Caco-2 (cell line): ENCODE measurements at regions of chr1 and their contacts with region 1.

Region 1: DNA sequence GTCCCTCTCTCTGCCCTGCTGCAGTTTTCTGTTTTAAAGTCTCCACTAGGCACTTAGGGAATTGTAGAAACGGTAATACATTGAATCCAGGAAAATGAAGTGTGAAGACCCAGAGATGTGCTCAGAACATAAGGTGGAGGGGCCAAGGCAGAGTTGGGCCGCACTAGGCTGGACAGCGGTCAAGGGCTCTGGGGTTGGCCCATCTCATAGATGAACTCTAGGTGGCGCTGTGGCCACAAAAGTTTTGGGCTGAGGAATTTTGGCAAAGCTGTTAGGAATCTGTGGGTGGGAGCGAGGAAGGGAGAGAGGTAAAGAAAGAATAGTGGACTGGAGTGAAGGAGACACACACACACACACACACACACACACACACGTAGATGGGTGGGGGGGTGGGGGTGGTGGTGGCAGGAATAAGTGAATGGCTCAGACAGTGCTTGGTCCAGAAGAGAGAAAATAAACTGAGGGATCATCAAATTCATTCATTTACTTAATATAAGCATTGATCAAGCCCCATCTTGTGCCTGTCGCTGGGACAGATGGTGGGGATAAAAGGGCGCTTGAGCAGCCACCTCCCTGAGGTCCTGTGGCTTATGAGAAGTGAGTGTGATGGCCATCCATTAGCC is 258.5 kb downstream of the TRABD2B start:
- DNase-seq: peak; percentile 46 to 69
- H3K4me3 ChIP-seq: no peak overlapping the region
- H3K4me3 Mint-ChIP-seq: no peak overlapping the region
- H3K27ac Mint-ChIP-seq: no peak overlapping the region
- H3K4me1 ChIP-seq: no peaks in the 10 kb centered on the region
- H3K4me1 Mint-ChIP-seq: no peaks in the 10 kb centered on the region
- H3K27me3 ChIP-seq: no peaks in the 10 kb centered on the region
- H3K27me3 Mint-ChIP-seq: no peaks in the 10 kb centered on the region
- CTCF ChIP-seq: peak; percentile 65 to 82

Region 2: GRCh38 chr1:47755101-47755990 is 16.7 kb after region 1 on chr1:
- CTCF ChIA-PET with region 1: interaction called, 5 read pairs
- POLR2A ChIA-PET with region 1: no interaction called
- intact Hi-C with region 1: loop called (anchors 1 kb)
- DNase-seq: peak; percentile 53 to 71
- H3K4me3 ChIP-seq: no peak overlapping the region
- H3K4me3 Mint-ChIP-seq: no peak overlapping the region
- H3K27ac Mint-ChIP-seq: no peak overlapping the region
- H3K4me1 ChIP-seq: no peaks in the 10 kb centered on the region
- H3K4me1 Mint-ChIP-seq: peaks cover 7% of the 10 kb centered on the region
- H3K27me3 ChIP-seq: no peaks in the 10 kb centered on the region
- H3K27me3 Mint-ChIP-seq: no peaks in the 10 kb centered on the region
- CTCF ChIP-seq: peak; percentile 59 to 63

Region 3: GRCh38 chr1:47782124-47782789 is 43.6 kb after region 1 on chr1:
- CTCF ChIA-PET with region 1: no interaction called
- POLR2A ChIA-PET with region 1: no interaction called
- intact Hi-C with region 1: no loop called
- DNase-seq: no peak
- H3K4me3 ChIP-seq: no peak overlapping the region
- H3K4me3 Mint-ChIP-seq: no peak overlapping the region
- H3K27ac Mint-ChIP-seq: no peak overlapping the region
- H3K4me1 ChIP-seq: no peaks in the 10 kb centered on the region
- H3K4me1 Mint-ChIP-seq: peaks cover 7% of the 10 kb centered on the region
- H3K27me3 ChIP-seq: no peaks in the 10 kb centered on the region
- H3K27me3 Mint-ChIP-seq: peaks cover 4% of the 10 kb centered on the region
- CTCF ChIP-seq: no peak

Region 4: DNA sequence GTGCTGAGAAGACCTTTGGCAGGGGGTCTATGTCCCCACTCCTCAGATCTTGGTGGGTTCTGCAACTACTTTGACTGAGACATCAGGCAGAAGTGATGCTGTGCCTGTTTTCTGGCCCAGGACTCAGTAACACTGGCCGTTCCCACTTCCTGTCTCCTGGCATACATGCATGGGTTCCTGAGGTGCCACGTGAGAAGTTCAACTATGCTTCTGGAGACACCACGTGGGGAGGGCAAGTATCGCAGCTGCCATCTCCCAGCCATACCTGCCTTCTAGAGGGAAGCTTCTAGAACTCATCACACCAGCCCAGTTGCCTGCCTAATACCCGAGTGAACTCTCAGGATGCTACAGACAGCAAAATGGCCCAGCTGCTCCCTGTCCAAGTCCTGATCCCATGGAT is 192.7 kb after region 1 on chr1:
- CTCF ChIA-PET with region 1: interaction called, 4 read pairs
- POLR2A ChIA-PET with region 1: no interaction called
- intact Hi-C with region 1: loop called (anchors 1 kb)
- DNase-seq: peak in 1 of 2 experiments; percentile 11
- H3K4me3 ChIP-seq: no peak overlapping the region
- H3K4me3 Mint-ChIP-seq: no peak overlapping the region
- H3K27ac Mint-ChIP-seq: no peak overlapping the region
- H3K4me1 ChIP-seq: no peaks in the 10 kb centered on the region
- H3K4me1 Mint-ChIP-seq: peaks cover 5% of the 10 kb centered on the region
- H3K27me3 ChIP-seq: no peaks in the 10 kb centered on the region
- H3K27me3 Mint-ChIP-seq: peaks cover 4% of the 10 kb centered on the region
- CTCF ChIP-seq: peak; percentile 15 to 39

Region 5: DNA sequence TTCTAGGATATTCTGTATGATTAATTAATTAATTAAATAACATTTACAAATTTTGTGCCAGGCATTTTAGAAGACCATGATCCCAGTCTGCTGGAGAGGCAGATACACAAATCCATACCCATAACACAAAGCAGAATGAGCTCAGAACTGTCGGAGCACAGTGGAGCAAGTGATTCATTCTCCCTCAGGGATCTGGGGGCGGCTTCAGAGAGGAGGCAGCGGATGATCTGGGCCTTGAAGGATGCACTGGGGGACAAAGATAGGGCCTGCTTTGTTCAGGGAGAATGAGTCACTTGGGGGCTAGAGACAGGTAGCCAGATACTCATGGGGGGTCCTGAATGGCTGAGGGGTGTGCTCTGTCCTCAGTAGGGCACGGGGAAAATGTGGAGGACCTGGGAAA is 309.4 kb after region 1 on chr1:
- CTCF ChIA-PET with region 1: no interaction called
- POLR2A ChIA-PET with region 1: no interaction called
- intact Hi-C with region 1: no loop called
- DNase-seq: no peak
- H3K4me3 ChIP-seq: no peak overlapping the region
- H3K4me3 Mint-ChIP-seq: no peak overlapping the region
- H3K27ac Mint-ChIP-seq: no peak overlapping the region
- H3K4me1 ChIP-seq: peaks cover 36% of the 10 kb centered on the region
- H3K4me1 Mint-ChIP-seq: peaks cover 23% of the 10 kb centered on the region
- H3K27me3 ChIP-seq: no peaks in the 10 kb centered on the region
- H3K27me3 Mint-ChIP-seq: no peaks in the 10 kb centered on the region
- CTCF ChIP-seq: no peak

Region 6: DNA sequence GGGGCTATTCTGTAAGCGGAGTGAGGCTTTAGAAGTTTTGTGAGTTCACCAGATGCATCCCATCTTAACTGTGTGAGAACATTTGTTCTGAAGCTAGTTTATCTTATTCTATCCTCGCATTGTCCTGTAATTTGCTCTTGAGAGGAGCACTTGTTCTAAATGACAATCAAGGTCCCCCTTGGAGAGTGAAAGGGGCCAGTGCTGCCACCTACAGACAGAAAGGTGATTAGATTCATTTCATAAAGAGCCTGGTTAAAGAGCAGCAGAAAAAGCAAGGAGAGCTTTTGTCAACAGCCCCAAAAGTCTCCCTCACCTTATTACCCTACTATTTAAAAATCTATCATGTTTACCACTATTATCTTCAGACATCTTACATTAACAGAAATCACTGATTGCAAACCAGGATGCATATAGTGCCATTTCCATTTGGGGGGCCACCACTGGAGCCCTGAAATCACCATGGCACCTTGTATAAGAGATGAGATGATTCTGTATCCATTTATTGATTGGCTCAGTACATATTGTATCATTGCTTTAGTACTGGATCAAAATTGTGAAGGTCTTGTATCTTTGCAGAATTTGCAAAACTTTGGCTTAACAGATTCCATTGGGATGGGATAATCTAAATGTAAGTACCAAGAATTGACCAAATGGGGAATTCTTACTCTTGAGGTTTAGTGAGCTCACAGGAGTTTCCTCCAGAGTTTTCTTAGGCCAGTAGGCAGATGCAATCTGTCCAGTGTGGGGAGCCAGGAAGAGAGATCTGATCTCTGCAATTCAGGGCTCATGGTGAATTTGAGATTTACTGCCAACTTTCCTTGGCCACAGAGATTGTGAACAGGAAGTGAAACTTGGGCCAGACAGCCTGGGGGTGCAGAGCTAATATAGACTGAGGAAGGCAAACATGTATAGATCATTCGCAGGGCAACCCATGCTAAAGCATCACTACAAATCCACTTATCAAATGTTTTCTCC is 322.8 kb after region 1 on chr1:
- CTCF ChIA-PET with region 1: no interaction called
- POLR2A ChIA-PET with region 1: no interaction called
- intact Hi-C with region 1: loop called (anchors 5 kb)
- DNase-seq: peak; percentile 45 to 69
- H3K4me3 ChIP-seq: no peak overlapping the region
- H3K4me3 Mint-ChIP-seq: no peak overlapping the region
- H3K27ac Mint-ChIP-seq: no peak overlapping the region
- H3K4me1 ChIP-seq: no peaks in the 10 kb centered on the region
- H3K4me1 Mint-ChIP-seq: peaks cover 10% of the 10 kb centered on the region
- H3K27me3 ChIP-seq: no peaks in the 10 kb centered on the region
- H3K27me3 Mint-ChIP-seq: no peaks in the 10 kb centered on the region
- CTCF ChIP-seq: peak; percentile 61 to 62